ENCODE measurements at regions of chr16 and their contacts with region 1.

Region 1: DNA sequence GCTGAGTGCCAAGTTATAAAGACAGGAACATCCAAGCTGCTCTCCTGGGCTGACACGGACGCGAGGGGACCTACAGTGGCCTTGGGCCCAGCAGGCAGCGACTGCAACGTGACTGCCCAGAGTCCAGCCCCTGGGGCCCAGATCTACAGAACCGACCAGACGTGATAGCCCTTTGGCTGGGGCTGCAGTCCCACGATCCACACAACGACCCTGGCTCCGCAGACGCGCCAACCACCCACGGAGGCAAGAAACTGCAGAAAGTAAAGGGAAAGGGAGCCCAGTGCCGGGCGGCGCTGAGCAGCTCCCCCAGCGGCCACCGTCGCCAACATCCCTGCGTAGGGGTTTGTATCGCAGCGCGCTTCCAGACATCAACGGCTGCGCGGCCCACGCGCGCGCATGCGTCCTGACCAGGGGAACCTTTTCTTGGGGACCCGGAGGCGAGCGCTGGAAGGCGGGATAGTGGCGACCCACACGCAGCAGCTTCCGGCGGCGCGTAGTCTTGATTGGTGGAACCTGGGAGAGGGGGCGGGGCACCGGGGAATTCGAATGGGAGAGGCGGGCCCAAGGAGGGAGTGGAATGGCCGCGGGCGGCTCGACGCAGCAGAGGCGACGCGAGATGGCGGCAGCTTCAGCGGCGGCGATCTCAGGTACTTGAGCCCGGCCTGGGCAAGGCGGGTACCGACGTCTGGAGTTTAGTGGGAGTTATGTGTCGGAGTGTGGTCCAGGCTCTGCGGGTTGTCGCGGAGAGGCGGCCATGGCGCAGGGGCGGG is at the start of gene KIF22:
- DNase-seq: peak; percentile 99
- ATAC-seq: peak; percentile 97 to 98
- H3K4me3 ChIP-seq: peak within 1 kb of the TSS; percentile 94
- H3K27ac ChIP-seq: peak within 1 kb of the TSS; percentile 94 to 96
- H3K4me1 ChIP-seq: peaks cover 20% of the 10 kb centered on the region
- CTCF ChIP-seq: peak; percentile 60
- EP300 ChIP-seq: no peak
- POLR2A ChIP-seq: peak; percentile 51; the same call in 1 of the 2 replicates
- RAD21 ChIP-seq: peak in 1 of 2 experiments; percentile 44; a peak in 2 of 5 replicates
- polyA plus RNA-seq, gene KIF22: 64.3 and 85.9 TPM in 2 replicates

Region 2: DNA sequence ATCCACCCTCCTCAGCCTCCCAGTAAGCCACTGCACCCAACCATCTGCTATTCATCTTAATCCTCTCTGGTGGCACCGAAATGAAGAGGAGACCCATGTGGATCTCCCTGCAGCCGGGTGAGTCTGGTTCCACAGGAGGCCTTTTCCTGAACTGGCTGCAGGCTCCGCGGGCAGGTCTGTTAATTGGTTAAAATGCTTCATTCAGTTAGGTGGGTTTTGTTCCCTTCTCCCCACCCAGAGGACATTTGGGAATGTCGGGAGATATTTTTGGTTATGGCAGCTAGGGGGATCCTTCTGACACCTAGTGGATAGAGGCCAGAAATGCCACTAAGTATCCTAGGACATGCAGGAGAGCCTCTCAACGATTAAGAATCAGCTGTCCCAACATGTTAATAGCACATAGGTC is 61.2 kb before region 1 on chr16:
- CTCF ChIA-PET with region 1: interaction called, 19 read pairs
- POLR2A ChIA-PET with region 1: interaction called, 5 read pairs
- DNase-seq: peak; percentile 68 to 83
- ATAC-seq: peak; percentile 96 to 98
- H3K4me3 ChIP-seq: peak overlapping the region; percentile 34; the same call in 2 of the 3 replicates
- H3K27ac ChIP-seq: peak overlapping the region; percentile 54 to 71; a peak in 4 of 6 replicates
- H3K4me1 ChIP-seq: 0 out of 3 replicates have a peak, but pooled peaks cover 3% of the 10 kb centered on the region
- CTCF ChIP-seq: peak; percentile 64
- EP300 ChIP-seq: no peak
- POLR2A ChIP-seq: no peak
- RAD21 ChIP-seq: peak; percentile 52; a peak in 4 of 5 replicates

Region 3: GRCh38 chr16:29769507-29769906 is 20.9 kb before region 1 on chr16:
- CTCF ChIA-PET with region 1: interaction called, 17 read pairs
- POLR2A ChIA-PET with region 1: no interaction called
- DNase-seq: no peak
- ATAC-seq: no peak
- H3K4me3 ChIP-seq: no peak overlapping the region
- H3K27ac ChIP-seq: no peak overlapping the region
- H3K4me1 ChIP-seq: no peaks in the 10 kb centered on the region
- CTCF ChIP-seq: no peak
- EP300 ChIP-seq: no peak
- POLR2A ChIP-seq: no peak
- RAD21 ChIP-seq: no peak

Region 4: GRCh38 chr16:29805378-29806098 is 15.2 kb after region 1 on chr16:
- CTCF ChIA-PET with region 1: interaction called, 54 read pairs
- POLR2A ChIA-PET with region 1: interaction called, 25 read pairs
- DNase-seq: peak; percentile 84 to 98
- ATAC-seq: peak; percentile 44 to 80
- H3K4me3 ChIP-seq: peak overlapping the region; percentile 55
- H3K27ac ChIP-seq: peak overlapping the region; percentile 98 to 99
- H3K4me1 ChIP-seq: peaks cover 38% of the 10 kb centered on the region
- CTCF ChIP-seq: no peak
- EP300 ChIP-seq: peak in 1 of 2 experiments; percentile 49; a peak in 1 of 5 replicates
- POLR2A ChIP-seq: peak; percentile 57
- RAD21 ChIP-seq: peak in 1 of 2 experiments; percentile 3; a peak in 1 of 5 replicates

Region 5: DNA sequence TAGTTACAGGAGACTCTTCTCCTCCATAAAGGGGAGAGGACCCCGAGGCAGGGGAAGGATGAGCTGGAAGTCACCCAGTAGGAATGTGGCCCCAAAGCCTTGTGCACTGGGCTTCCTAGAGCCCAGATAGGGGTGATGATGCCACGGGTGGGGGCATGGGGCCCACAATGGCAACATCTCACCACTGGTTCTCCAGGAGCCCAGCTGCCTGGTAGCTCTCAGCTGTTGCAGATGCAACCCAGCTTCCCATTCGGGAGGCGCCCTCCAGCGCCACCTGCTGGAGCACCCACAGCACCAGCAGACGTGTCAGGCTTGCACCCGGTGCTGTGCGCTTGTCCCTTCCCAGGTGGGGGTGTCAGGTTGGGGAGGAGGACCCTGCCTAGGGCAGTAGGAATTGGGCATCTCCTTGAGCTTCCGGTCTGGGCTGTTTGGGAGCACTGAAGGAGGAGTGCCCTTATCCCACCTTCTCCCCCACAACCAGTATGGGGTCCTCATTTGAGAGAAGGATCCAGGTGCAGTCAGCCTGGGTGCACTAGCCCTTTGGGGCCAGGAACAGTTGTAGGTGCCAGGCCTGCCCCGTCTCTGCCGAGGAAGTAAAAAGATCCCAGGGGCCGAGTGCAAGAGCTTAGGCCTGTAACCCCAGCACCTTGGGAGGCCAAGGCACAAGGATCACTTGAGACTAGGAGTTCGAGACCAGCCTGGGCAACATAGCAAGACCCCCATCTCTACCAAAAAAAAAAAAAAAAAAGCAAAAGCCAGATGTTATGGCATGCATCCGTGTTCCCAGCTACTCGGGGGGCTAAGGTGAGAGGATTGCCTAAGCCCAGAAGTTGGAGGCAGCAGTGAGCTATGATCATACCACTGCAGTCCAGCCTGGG is 58.3 kb after region 1 on chr16:
- CTCF ChIA-PET with region 1: interaction called, 10 read pairs
- POLR2A ChIA-PET with region 1: no interaction called
- DNase-seq: peak; percentile 77 to 81
- ATAC-seq: peak; percentile 92 to 95
- H3K4me3 ChIP-seq: no peak overlapping the region
- H3K27ac ChIP-seq: no peak overlapping the region
- H3K4me1 ChIP-seq: no peaks in the 10 kb centered on the region
- CTCF ChIP-seq: peak; percentile 89
- EP300 ChIP-seq: no peak
- POLR2A ChIP-seq: no peak
- RAD21 ChIP-seq: peak; percentile 78 to 86